ENCODE measurements at regions of chr21 and their contacts with region 1.

Region 1: GRCh38 chr21:33299181-33299752 is 25.5 kb upstream of the IFNAR1 start:
- DNase-seq: no peak

Region 2: DNA sequence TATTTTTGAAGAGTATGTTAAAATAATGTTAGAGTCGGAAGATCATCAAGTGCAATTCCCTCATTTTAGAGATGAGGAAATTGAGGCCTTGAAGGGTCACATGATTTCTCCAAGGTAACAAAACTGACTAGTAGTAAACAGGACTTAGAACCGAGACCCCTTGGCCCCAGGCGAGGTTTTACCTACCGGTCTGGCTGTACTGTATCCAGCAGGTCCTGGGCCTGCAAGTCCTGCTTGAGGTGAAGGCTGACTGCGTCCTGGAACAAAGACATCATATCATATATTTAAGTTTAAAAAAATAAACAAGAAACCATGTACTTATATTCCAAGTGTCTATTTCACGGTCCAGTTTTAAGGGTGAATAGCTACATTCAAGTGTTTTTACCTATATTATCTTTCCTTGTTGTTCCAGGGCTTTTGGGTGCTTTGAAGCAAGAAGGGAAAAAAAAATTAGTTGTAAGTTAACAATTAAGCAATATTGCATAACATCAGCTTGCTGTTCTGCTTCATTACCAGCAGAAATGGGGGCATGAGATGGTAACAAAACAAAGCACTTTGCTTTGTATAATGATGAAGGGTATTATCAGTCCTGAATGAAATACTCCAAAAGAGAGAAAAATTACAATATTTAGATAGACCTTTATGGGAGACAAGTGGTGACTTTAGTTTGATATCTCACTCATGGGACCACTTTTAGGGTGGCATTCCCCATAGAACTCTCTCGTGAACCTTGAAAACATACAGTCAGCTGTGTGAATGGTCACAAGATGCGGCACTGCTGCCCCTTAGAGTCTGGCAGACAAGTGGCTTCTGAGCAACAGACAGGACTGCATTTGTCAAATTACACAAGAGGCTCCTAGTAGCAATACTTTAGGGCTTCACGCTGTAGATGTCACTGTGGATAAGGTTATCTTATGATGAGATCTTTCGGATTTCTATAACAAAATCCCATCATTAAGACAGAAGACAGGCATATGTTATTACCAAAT is 657.3 kb before region 1 on chr21:
- intact Hi-C with region 1: no loop called
- DNase-seq: no peak

Region 3: GRCh38 chr21:33374450-33375096 is 75.3 kb after region 1 on chr21:
- intact Hi-C with region 1: loop called (anchors 2 kb)
- DNase-seq: peak in 3 of 10 donors; percentile 31 to 42 (median 35)